Mammary epithelial cell (primary cell): ENCODE measurements at regions of chr12 and their contacts with region 1.

Region 1: DNA sequence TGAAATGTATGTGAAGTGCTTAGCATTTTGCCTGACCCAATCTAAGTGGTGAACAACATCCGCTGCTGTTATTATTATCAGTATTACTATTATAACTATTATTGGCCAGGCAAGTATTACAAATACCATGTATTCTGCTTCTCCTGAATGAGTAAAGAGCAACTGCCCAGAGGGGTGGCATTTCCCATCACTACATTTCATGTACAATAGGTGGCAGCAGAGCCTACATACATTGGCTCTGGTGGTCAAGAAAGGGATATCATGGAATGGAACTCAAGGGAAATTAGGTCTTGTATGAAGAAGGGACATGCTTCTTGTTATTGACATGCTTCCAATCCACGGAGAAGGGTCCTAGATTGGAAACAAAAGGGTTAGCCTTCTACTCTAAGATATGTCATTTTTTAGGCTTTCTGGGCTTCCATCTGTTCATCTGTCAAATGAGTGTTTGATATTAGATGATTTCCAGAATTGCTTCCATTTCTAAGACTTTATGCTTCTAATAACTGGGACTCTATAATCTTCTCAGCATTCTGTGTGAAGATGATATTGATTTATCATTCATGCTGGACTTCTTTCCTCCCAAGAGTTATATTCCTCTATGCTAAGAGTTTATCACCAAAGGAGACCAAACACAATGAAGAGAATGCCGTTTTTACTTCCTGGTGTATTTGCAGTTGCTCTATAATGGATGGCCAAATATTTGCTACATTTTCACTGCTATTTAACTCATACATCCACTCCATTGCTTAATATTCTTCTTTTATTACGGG is 239.1 kb downstream of the SSPN start:
- DNase-seq: peak; percentile 60
- H3K4me3 ChIP-seq: no peak overlapping the region
- H3K27ac ChIP-seq: no peak overlapping the region
- H3K4me1 ChIP-seq: no peaks in the 10 kb centered on the region
- H3K27me3 ChIP-seq: no peaks in the 10 kb centered on the region
- CTCF ChIP-seq: peak; percentile 89 to 98

Region 2: DNA sequence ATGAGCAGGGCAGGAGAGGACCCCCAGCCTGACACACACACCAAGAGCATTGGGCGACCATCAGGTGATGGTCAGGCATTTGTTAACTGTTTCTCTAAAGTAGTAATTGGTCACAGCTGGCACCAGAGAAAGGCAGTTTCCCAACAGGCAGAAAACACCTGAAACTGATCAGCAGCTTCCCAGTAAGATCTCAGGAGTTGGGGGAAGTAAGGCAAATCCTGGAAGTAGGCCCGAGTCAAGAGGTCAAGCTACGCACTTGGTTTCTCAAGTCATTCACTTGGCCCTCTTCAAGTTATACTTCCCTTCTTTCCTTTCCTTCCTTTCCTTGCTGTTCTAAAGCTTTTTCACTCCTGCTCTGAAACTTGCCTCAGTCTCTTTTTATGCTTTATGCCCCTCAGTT is 103.3 kb before region 1 on chr12:
- CTCF ChIA-PET with region 1: interaction called, 10 read pairs
- dilution Hi-C with region 1: no loop called
- in situ Hi-C with region 1: no loop called
- intact Hi-C with region 1: no loop called
- DNase-seq: no peak
- H3K4me3 ChIP-seq: no peak overlapping the region
- H3K27ac ChIP-seq: no peak overlapping the region
- H3K4me1 ChIP-seq: no peaks in the 10 kb centered on the region
- H3K27me3 ChIP-seq: no peaks in the 10 kb centered on the region
- CTCF ChIP-seq: no peak

Region 3: DNA sequence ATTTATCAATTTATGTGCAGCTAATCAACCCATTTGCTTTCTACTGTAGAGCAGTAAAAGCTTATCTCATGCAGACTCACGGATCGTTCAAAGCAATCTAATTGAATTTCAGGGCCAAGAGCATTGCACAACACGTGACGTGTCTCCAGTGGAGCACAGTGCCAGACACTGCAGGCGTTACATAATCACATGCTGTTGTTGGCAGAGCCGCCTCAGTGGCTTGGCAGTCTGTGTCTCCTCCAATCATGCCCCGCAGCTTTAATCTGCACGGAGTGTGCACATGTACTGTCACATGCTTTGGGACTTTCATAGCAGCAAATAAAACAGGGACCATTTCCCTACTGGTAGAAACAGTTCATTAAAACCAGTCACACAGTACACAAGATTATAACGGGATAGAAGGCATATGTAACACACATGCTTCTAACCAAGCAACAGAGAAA is 89.2 kb after region 1 on chr12:
- CTCF ChIA-PET with region 1: no interaction called
- dilution Hi-C with region 1: no loop called
- in situ Hi-C with region 1: no loop called
- intact Hi-C with region 1: loop called (anchors 1 kb)
- DNase-seq: peak; percentile 92
- H3K4me3 ChIP-seq: no peak overlapping the region
- H3K27ac ChIP-seq: no peak overlapping the region
- H3K4me1 ChIP-seq: peaks cover 8% of the 10 kb centered on the region
- H3K27me3 ChIP-seq: no peaks in the 10 kb centered on the region
- CTCF ChIP-seq: no peak

Region 4: GRCh38 chr12:26576266-26576665 is 141.8 kb after region 1 on chr12:
- CTCF ChIA-PET with region 1: no interaction called
- dilution Hi-C with region 1: no loop called
- in situ Hi-C with region 1: no loop called
- intact Hi-C with region 1: no loop called
- DNase-seq: no peak
- H3K4me3 ChIP-seq: no peak overlapping the region
- H3K27ac ChIP-seq: no peak overlapping the region
- H3K4me1 ChIP-seq: no peaks in the 10 kb centered on the region
- H3K27me3 ChIP-seq: no peaks in the 10 kb centered on the region
- CTCF ChIP-seq: no peak

Region 5: DNA sequence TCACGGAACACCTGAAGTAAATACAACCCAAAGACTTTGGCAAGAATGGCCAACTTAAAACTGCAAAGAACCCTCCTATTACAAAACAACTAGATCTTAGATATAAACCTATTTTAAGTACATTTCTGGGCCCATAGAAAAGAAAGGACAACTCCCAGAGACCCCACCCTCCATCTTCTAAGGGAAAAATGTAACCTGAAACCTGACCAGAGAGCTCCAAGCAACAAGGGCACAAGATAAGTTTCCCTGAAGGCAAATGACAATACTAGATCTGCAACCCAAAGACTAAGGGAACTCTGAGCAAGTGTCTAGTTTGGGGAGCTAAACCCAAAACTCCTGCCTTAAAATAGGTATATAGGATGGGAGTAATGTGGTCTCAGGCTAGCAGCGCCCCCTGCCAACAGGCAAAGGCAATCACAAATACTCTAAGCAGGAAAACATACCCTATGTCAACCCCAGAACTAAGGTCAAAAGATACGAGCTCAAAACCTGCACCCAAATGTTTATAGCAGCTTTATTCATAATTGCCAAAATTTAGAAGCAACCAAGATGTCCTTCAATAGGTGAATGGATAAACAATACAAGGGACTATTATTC is 179.6 kb after region 1 on chr12:
- CTCF ChIA-PET with region 1: no interaction called
- dilution Hi-C with region 1: no loop called
- in situ Hi-C with region 1: no loop called
- intact Hi-C with region 1: loop called (anchors 1 kb)
- DNase-seq: no peak
- H3K4me3 ChIP-seq: no peak overlapping the region
- H3K27ac ChIP-seq: no peak overlapping the region
- H3K4me1 ChIP-seq: no peaks in the 10 kb centered on the region
- H3K27me3 ChIP-seq: no peaks in the 10 kb centered on the region
- CTCF ChIP-seq: peak; percentile 62 to 73

Region 6: DNA sequence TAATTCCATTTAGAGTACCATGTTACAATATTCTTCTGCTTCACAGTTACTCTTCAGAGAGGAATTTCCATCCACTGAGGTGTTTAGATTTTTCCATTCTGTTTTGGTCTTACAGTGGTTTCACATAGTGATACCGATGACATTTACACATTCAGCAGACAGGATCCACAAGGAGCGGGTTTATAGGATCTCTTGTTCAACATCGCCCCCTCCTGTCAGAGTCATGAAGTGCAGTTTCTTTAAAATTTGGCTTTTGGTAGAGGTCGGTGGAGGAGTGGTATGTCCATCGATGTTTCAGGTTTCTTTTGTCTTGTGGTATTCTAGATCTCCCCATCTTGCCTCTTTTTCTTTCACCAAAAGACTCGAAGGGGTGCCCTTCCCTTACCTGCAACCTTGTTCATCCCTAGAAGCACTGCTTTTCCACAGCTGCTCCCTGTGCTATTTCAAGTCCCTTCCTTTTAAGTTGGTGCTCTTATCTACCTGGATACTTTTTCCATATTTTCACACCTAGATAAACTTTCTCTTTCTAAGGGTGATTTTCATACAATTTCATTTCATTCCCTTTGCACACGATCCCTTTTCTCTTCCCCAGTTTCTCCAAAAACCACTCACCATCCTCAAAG is 217.2 kb after region 1 on chr12:
- CTCF ChIA-PET with region 1: no interaction called
- dilution Hi-C with region 1: no loop called
- in situ Hi-C with region 1: no loop called
- intact Hi-C with region 1: loop called (anchors 1 kb)
- DNase-seq: peak; percentile 67
- H3K4me3 ChIP-seq: no peak overlapping the region
- H3K27ac ChIP-seq: no peak overlapping the region
- H3K4me1 ChIP-seq: peaks cover 14% of the 10 kb centered on the region
- H3K27me3 ChIP-seq: no peaks in the 10 kb centered on the region
- CTCF ChIP-seq: peak; percentile 72 to 84

Region 7: DNA sequence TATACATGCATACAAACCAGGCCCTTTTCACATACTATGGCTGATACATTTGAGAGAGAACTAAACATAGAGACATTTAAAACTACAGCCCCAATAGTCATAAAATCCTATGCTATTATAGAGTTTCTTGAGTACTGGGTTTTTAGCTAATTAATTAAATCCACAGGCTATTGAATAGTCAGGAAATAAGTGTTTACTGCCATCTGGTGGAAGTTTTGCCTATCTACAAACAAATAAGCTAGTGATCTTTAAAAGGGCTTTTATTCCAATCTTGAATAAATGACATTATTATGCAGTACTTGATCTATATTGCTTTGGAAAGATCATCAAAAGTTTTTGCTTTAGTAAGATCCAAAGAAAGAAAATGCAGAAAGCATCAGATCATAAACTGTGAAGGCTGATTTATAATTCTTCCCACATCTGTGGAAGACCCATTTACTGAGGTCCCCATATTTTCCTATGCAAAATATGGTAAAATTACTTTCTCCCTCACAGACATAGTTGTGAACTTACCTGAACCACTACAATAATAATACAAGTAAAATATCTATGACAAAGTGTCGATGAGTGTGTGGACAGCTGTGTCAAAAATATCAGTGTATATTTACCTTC is 267.2 kb after region 1 on chr12:
- CTCF ChIA-PET with region 1: no interaction called
- dilution Hi-C with region 1: no loop called
- in situ Hi-C with region 1: no loop called
- intact Hi-C with region 1: loop called (anchors 1 kb)
- DNase-seq: peak; percentile 31
- H3K4me3 ChIP-seq: no peak overlapping the region
- H3K27ac ChIP-seq: no peak overlapping the region
- H3K4me1 ChIP-seq: no peaks in the 10 kb centered on the region
- H3K27me3 ChIP-seq: no peaks in the 10 kb centered on the region
- CTCF ChIP-seq: peak; percentile 43 to 57